ENCODE measurements at regions of chr1 and their contacts with region 1.

Region 1: GRCh38 chr1:247487057-247487456 is 29.2 kb upstream of the OR2B11 start:
- DNase-seq: peak; percentile 76
- H3K4me3 Mint-ChIP-seq: no peak overlapping the region
- H3K27ac Mint-ChIP-seq: no peak overlapping the region
- H3K4me1 Mint-ChIP-seq: peaks cover 11% of the 10 kb centered on the region
- H3K27me3 Mint-ChIP-seq: peaks cover 45% of the 10 kb centered on the region
- CTCF ChIP-seq: peak; percentile 84

Region 2: GRCh38 chr1:246907472-246907871 is 579.6 kb before region 1 on chr1:
- CTCF ChIA-PET with region 1: interaction called, 3 read pairs
- POLR2A ChIA-PET with region 1: no interaction called
- intact Hi-C with region 1: loop called (anchors 5 kb)
- DNase-seq: peak; percentile 78
- H3K4me3 Mint-ChIP-seq: no peak overlapping the region
- H3K27ac Mint-ChIP-seq: peak overlapping the region; percentile 25
- H3K4me1 Mint-ChIP-seq: no peaks in the 10 kb centered on the region
- H3K27me3 Mint-ChIP-seq: no peaks in the 10 kb centered on the region
- CTCF ChIP-seq: peak; percentile 74

Region 3: GRCh38 chr1:247287460-247287859 is 199.6 kb before region 1 on chr1:
- CTCF ChIA-PET with region 1: no interaction called
- POLR2A ChIA-PET with region 1: no interaction called
- intact Hi-C with region 1: no loop called
- DNase-seq: no peak
- H3K4me3 Mint-ChIP-seq: no peak overlapping the region
- H3K27ac Mint-ChIP-seq: no peak overlapping the region
- H3K4me1 Mint-ChIP-seq: no peaks in the 10 kb centered on the region
- H3K27me3 Mint-ChIP-seq: no peaks in the 10 kb centered on the region
- CTCF ChIP-seq: no peak

Region 4: GRCh38 chr1:247367786-247368422 is 119.2 kb before region 1 on chr1:
- CTCF ChIA-PET with region 1: interaction called, 203 read pairs
- POLR2A ChIA-PET with region 1: interaction called, 9 read pairs
- intact Hi-C with region 1: loop called (anchors 1 kb)
- DNase-seq: no peak
- H3K4me3 Mint-ChIP-seq: no peak overlapping the region
- H3K27ac Mint-ChIP-seq: no peak overlapping the region
- H3K4me1 Mint-ChIP-seq: no peaks in the 10 kb centered on the region
- H3K27me3 Mint-ChIP-seq: no peaks in the 10 kb centered on the region
- CTCF ChIP-seq: no peak

Region 5: GRCh38 chr1:247373721-247374141 is 113.3 kb before region 1 on chr1:
- CTCF ChIA-PET with region 1: interaction called, 697 read pairs
- POLR2A ChIA-PET with region 1: interaction called, 9 read pairs
- intact Hi-C with region 1: loop called (anchors 1 kb)
- DNase-seq: peak; percentile 70
- H3K4me3 Mint-ChIP-seq: peak overlapping the region; percentile 3
- H3K27ac Mint-ChIP-seq: no peak overlapping the region
- H3K4me1 Mint-ChIP-seq: peaks cover 5% of the 10 kb centered on the region
- H3K27me3 Mint-ChIP-seq: no peaks in the 10 kb centered on the region
- CTCF ChIP-seq: peak; percentile 44

Region 6: DNA sequence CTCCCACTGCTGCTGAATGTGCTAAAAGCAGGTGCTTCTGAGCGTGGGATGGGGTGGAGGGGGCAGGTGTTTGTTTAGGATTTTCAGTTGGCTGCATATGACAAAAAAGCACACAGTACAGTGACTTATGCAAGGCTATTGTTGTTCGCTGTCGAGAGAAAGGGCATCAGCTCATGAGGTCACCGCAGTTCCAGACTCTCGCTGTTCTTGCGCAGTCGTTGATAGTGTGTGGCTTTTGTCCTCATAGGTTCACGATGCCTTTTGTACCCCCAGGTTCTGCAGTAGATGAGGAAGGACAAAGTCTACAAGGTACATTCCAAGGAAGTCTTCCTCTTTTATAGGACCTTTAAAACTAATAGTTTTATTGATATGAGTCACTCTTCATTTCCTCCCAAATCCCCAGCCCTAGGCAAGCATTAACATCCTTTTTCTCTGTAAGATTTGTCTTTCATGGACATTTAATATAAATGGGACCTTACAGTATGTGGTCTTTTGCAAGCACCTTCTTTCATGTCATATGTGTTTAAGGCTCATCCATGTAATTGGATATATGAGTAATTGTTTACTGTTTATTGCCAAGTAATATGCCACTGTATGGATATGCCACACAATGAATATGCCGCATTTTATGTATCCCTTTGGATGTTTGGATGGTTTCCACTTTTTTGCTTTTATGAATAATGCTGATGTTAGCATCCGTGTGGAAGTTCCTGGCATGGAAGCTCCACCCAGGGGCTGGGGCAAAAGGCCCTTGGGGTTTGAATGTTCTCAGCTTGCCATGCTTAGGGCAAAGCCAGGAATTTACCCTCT is 85.5 kb before region 1 on chr1:
- CTCF ChIA-PET with region 1: interaction called, 10 read pairs
- POLR2A ChIA-PET with region 1: interaction called, 5 read pairs
- intact Hi-C with region 1: no loop called
- DNase-seq: peak; percentile 49
- H3K4me3 Mint-ChIP-seq: peak overlapping the region; percentile 49
- H3K27ac Mint-ChIP-seq: peak overlapping the region; percentile 41
- H3K4me1 Mint-ChIP-seq: peaks cover 21% of the 10 kb centered on the region
- H3K27me3 Mint-ChIP-seq: no peaks in the 10 kb centered on the region
- CTCF ChIP-seq: no peak

Region 7: DNA sequence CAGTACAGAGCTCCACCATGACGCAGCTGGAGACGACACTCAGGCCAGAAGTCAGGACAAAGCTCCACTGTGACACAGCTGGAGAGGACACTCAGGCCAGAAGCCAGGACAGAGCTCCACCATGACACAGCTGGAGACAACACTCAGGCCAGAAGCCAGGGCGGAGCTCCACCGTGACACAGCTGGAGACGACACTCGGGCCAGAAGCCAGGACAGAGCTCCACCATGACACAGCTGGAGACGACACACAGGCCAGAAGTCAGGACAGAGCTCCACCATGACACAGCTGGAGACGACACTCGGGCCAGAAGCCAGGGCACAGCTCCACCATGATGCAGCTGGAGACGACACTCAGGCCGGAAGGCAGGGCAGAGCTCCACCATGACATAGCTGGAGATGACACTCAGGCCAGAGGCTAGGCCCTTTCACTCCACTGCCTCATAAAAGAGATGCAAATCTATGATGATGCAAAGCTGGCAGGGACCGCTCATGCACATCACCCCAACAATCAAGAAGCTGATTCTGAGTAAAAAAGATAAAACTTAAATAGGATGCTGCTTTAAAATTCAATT is 15.5 kb before region 1 on chr1:
- CTCF ChIA-PET with region 1: interaction called, 55 read pairs
- POLR2A ChIA-PET with region 1: interaction called, 5 read pairs
- intact Hi-C with region 1: no loop called
- DNase-seq: no peak
- H3K4me3 Mint-ChIP-seq: no peak overlapping the region
- H3K27ac Mint-ChIP-seq: no peak overlapping the region
- H3K4me1 Mint-ChIP-seq: no peaks in the 10 kb centered on the region
- H3K27me3 Mint-ChIP-seq: no peaks in the 10 kb centered on the region
- CTCF ChIP-seq: no peak

Region 8: GRCh38 chr1:247576495-247576894 is 89.4 kb after region 1 on chr1:
- CTCF ChIA-PET with region 1: interaction called, 5 read pairs
- POLR2A ChIA-PET with region 1: no interaction called
- intact Hi-C with region 1: loop called (anchors 1 kb)
- DNase-seq: peak; percentile 49
- H3K4me3 Mint-ChIP-seq: no peak overlapping the region
- H3K27ac Mint-ChIP-seq: no peak overlapping the region
- H3K4me1 Mint-ChIP-seq: peaks cover 10% of the 10 kb centered on the region
- H3K27me3 Mint-ChIP-seq: no peaks in the 10 kb centered on the region
- CTCF ChIP-seq: peak; percentile 75

Region 9: DNA sequence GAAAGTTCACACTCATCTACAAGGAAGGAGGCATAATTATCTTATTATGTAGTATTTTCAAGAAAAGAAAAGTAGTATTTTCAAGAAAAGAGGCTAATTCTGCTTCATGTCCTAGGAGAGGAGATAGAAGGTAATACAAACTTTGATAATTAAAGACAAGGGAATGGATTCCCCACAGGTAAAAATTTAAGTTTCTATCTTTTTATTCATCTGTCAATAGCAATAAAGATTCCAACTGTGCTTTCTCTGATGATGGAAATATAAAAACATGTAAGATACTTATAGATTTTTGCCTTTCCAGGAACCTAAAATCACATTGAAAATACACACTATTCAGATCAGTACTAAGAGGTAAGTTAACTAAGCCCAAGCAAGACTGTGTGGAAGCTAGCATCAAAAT is 687.5 kb after region 1 on chr1 and contains the start of gene OR2M2:
- CTCF ChIA-PET with region 1: no interaction called
- POLR2A ChIA-PET with region 1: no interaction called
- intact Hi-C with region 1: no loop called
- DNase-seq: no peak
- H3K4me3 Mint-ChIP-seq: no peak within 1 kb of the TSS
- H3K27ac Mint-ChIP-seq: no peak within 1 kb of the TSS
- H3K4me1 Mint-ChIP-seq: no peaks in the 10 kb centered on the region
- H3K27me3 Mint-ChIP-seq: no peaks in the 10 kb centered on the region
- CTCF ChIP-seq: no peak
- total RNA-seq, gene OR2M2: not detected in 2 replicates

Measured in MCF 10A (cell line).